ENCODE measurements at regions of chr5 and their contacts with region 1.

Region 1: DNA sequence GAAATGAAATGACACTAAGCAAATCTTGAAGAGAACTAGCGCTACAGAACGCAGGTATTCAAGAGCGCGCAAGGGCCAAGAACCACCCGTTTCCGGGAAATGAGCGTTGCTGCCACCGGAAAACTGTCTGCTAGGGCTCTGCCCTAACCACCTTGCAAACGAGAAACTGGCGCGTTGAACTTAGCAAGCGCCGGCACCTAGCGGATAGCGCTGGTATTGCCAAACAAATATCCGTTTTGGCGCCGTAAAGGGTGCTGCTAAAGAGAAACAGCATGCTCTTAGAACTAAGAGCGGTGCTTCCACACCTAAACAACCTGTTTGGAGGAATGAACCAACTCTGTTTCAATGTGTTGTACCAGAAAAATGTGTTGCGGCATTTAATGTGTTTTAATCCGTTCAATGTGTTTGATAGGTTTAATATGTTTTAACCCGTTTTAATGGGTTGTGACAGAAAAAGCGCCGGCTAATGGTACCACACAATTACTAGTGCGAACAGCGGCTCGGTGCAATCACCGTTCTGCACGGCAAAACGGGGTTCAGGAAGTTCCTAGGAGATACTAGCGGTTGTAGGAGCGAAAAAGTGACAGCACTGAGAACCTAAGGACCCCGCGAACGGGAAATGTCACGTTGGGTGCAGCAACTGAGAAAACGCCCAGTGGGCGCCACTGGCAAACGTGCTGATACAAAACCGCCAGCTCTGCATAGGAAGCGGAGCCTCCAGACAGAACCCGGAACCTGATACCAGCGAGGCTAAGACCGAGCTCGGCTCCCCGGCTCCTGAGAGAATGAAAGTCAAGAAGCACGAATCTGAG is at the start of gene ANXA2R:
- DNase-seq: peak; percentile 96
- total RNA-seq, gene ANXA2R: 2.3 to 4.7 TPM

Region 2: GRCh38 chr5:41869739-41870626 is 1170.5 kb before region 1 on chr5 and contains the start of gene OXCT1:
- intact Hi-C with region 1: loop called in 1 of 2 experiments (anchors 5 kb)
- DNase-seq: peak; percentile 95
- total RNA-seq, gene OXCT1: 44.0 to 44.2 TPM

Region 3: GRCh38 chr5:43008369-43009153 is 31.9 kb before region 1 on chr5:
- intact Hi-C with region 1: loop called in 1 of 2 experiments (anchors 5 kb)
- DNase-seq: peak; percentile 95

Region 4: GRCh38 chr5:43066799-43067741 is 26.6 kb after region 1 on chr5:
- intact Hi-C with region 1: loop called in 1 of 2 experiments (anchors 2 kb)
- DNase-seq: peak; percentile 95